Left cardiac atrium (tissue), 4 donors: ENCODE measurements at regions of chr16 and their contacts with region 1.

Region 1: DNA sequence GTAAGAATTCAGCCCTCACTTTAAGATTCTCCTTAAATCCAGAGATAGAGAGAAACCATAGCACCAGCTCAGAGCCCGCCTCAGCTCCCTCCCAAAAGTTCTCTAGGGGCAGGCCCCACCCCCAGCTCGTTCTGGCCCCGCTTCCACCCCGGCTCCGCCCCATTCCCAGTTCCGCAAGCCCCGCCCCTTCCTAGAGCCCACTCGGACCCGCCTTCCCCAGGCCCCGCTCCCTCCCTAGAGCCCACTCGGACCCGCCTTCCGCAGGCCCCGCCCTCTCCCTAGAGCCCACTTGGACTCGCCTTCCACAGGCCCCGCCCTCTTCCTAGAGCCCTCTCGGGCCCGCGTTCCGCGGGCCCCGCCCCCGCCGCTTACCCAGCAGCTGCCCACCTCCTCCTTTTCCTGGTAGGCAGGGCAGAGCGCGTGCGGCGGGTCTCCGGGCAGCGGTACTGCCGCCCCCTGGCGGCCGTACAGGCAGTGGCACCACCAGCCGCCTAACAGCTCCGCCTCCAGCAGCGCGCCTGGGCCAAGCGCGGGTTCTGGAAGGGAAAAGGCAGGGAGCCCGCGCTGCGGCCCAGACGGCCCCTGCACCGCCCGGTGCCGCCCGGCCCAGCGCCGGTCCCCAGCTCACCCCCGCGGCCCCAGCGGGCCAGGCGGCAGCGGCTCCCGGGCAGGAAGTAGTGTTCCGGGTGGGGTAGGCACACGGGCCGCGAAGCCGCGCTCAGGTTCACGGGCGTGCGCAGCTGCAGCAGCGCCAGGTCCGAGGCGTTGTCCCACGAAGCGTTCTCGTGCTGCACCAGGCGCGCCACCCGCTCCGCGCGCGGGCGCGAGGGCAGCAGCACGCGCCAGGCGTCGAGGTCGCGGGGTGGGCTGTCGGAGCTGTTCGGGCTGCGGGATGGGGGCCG is 6.8 kb upstream of the PRSS8 start:
- DNase-seq: peak; percentile 99
- ATAC-seq: peak; percentile 97 to 98

Region 2: GRCh38 chr16:31108035-31108793 is 34.1 kb before region 1 on chr16 and contains the start of gene BCKDK:
- intact Hi-C with region 1: loop called in 1 of 2 experiments (anchors 5 kb)
- DNase-seq: peak; percentile 87
- ATAC-seq: peak; percentile 87 to 89
- total RNA-seq, gene BCKDK: 43.4 to 46.4 TPM

Region 3: DNA sequence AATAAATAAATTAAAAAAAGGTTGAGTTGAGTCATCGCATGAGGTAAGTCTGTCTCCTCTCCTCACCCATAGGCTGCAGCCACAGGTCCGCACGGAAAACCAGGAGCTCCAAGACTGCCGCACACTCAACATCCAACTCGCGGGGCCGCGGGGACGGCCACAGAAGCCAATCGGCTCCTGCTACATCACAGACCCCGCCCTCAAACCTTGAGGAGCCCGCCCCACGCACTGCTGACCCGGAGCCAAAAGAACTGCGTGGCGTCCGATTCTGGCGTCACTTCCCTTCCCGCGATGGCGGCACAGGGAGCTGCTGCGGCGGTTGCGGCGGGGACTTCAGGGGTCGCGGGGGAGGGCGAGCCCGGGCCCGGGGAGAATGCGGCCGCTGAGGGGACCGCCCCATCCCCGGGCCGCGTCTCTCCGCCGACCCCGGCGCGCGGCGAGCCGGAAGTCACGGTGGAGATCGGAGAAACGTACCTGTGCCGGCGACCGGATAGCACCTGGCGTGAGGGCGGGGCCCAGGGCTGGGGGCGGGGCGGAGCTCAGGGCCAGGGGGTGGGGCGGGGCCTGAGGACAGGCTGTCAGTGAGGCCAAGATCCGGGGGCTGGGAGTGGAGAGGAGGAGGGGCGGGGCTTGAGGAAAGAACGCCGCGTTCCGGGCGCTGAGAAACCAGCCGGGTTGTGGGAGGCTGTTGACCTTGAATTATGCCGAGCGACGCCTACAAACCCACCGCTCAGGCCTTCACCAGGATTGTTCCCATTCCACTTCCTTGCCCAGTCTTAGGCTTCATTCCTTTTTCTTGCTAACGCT is 24.8 kb before region 1 on chr16 and contains the start of gene KAT8:
- intact Hi-C with region 1: loop called in 1 of 2 experiments (anchors 1 kb)
- DNase-seq: peak; percentile 98
- ATAC-seq: peak; percentile 98
- total RNA-seq, gene KAT8: 57.3 to 74.1 TPM